Mammary epithelial cell (primary cell): ENCODE measurements at regions of chr9 and their contacts with region 1.

Region 1: DNA sequence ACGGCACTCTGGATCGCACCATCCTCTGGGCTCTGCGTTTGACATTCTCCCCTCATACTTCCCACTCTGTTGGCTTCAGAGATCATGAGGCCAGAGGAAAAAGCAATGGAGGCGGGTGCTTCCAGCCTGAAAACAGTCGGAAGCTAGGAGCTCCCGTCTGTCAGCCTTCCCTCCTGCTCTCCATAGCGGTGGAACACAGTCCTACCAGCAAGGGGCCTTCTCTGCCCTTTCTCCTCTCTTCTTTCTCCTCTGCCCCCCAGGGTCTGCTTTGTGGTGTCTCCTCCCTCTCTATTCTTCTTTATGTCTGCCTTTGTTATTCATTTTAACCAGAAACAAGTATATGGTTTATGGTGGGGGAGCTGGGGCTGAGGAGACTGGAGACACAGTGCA is 152.5 kb upstream of the NFIB start:
- DNase-seq: no peak
- H3K4me3 ChIP-seq: no peak overlapping the region
- H3K27ac ChIP-seq: no peak overlapping the region
- H3K4me1 ChIP-seq: no peaks in the 10 kb centered on the region
- H3K27me3 ChIP-seq: no peaks in the 10 kb centered on the region
- CTCF ChIP-seq: no peak

Region 2: GRCh38 chr9:14573333-14573732 is 106.9 kb after region 1 on chr9:
- CTCF ChIA-PET with region 1: no interaction called
- dilution Hi-C with region 1: no loop called
- in situ Hi-C with region 1: no loop called
- intact Hi-C with region 1: no loop called
- DNase-seq: no peak
- H3K4me3 ChIP-seq: no peak overlapping the region
- H3K27ac ChIP-seq: no peak overlapping the region
- H3K4me1 ChIP-seq: no peaks in the 10 kb centered on the region
- H3K27me3 ChIP-seq: no peaks in the 10 kb centered on the region
- CTCF ChIP-seq: no peak

Region 3: DNA sequence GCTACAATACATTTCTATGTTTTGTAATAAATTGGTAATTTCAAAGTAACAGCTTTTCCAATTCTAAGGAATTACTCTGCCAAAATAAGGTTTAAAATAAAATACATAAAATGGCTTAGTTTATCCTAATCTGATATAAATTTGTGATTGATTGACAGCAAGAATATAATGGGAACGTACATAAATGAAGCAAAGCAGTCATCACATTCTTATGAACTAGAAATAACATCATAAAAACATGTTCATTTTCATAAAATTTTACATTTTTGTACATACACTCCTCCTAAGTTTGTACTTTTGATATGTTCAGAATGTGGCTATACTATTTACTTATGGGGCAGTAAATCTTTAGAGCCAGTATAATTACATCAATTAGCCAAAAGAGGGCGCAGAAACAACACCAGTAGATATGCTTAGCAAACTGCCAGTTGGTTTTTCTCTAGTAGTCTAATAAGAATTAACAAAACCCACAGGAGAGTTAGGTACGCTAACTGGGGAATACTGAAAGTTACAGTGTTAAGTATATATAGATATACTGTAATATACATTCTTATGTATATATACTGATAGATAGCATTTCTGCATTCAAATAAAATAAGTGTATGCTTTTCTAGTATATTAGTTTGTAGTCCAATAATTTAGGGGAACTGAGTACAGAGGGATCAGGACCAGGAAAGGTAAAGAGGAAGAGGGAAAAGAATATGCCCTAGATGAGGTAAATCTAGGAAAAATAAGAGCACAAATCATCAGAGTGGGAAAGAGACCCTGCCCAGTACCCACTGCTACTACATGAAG is 150.0 kb after region 1 on chr9:
- CTCF ChIA-PET with region 1: no interaction called
- dilution Hi-C with region 1: no loop called
- in situ Hi-C with region 1: no loop called
- intact Hi-C with region 1: loop called (anchors 1 kb)
- DNase-seq: peak; percentile 34
- H3K4me3 ChIP-seq: no peak overlapping the region
- H3K27ac ChIP-seq: no peak overlapping the region
- H3K4me1 ChIP-seq: no peaks in the 10 kb centered on the region
- H3K27me3 ChIP-seq: no peaks in the 10 kb centered on the region
- CTCF ChIP-seq: peak; percentile 62 to 72

Region 4: DNA sequence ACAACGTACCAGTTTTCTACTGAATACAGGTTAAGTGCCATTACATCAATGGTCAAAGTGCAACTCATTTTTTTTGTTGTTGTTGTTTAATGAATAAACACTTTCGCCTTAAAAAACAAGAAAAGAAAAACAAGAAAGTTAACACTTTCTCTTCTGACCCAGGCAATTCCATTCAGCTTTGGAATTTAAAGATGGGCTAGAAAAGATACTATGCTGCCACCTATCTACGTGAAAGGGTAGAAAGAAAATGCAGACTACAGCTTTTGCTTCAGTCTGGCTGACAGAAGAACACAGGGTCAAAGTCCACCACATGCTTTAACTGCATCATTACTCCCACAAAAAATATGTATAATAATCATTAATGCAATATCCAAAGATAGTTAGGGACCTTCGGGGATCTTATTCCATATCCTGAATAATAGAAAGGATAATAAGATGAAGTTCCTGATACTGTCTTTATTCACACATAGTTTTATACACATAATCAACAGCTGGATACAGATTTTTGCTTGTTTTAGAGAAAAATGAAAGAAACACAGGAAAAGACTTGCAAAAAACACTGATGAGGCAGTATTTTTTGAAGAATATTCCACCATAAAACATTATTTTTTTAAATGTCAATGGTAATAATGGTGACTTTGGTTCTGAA is 186.4 kb after region 1 on chr9:
- CTCF ChIA-PET with region 1: no interaction called
- dilution Hi-C with region 1: no loop called
- in situ Hi-C with region 1: loop called in 1 of 2 experiments (anchors 25 kb)
- intact Hi-C with region 1: loop called (anchors 2 kb)
- DNase-seq: peak; percentile 3
- H3K4me3 ChIP-seq: no peak overlapping the region
- H3K27ac ChIP-seq: no peak overlapping the region
- H3K4me1 ChIP-seq: no peaks in the 10 kb centered on the region
- H3K27me3 ChIP-seq: no peaks in the 10 kb centered on the region
- CTCF ChIP-seq: peak; percentile 25 to 59

Region 5: DNA sequence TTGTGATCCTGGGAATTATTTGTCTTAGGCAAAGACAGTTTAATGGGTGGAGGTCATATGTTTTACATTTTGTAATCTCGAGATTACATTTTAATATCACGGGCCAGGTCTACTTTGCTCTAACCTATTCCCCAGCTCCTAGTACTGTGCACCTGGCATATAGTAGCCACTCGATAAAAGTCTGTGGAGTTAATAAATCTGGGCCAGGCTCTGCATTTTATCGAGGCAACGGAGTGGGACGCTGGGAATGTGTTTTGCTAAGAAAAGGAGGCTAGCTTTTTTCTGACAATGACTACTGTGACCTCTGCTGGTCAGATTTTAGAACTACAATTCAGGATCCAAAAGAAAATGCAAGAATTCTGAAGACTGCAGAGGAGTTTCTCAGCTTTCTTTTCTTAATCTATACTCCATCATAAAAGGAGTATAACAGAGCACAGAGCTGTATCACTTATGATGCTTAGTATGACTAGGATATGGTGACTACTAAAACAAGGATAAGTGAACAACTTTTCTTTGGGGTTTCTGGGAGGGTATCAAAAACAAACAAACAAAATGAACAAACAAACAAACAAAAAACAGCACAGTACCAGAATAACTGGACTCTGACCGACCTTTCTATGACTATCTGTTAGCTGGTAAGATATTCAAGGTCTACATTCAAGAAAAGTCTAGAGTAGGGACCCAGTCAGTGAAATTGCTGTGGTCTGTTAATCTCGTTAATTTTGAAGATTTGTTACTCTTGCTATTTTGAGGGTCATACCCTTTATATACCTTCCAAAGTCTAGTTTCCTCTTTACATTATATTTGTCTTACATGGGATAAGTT is 302.2 kb after region 1 on chr9:
- CTCF ChIA-PET with region 1: interaction called, 7 read pairs
- dilution Hi-C with region 1: no loop called
- in situ Hi-C with region 1: loop called (anchors 10 kb)
- intact Hi-C with region 1: loop called (anchors 1 kb)
- DNase-seq: peak; percentile 36
- H3K4me3 ChIP-seq: no peak overlapping the region
- H3K27ac ChIP-seq: no peak overlapping the region
- H3K4me1 ChIP-seq: no peaks in the 10 kb centered on the region
- H3K27me3 ChIP-seq: no peaks in the 10 kb centered on the region
- CTCF ChIP-seq: peak; percentile 56 to 72

Region 6: GRCh38 chr9:14846871-14847311 is 380.5 kb after region 1 on chr9:
- CTCF ChIA-PET with region 1: no interaction called
- dilution Hi-C with region 1: no loop called
- in situ Hi-C with region 1: no loop called
- intact Hi-C with region 1: loop called (anchors 2 kb)
- DNase-seq: peak; percentile 23
- H3K4me3 ChIP-seq: no peak overlapping the region
- H3K27ac ChIP-seq: no peak overlapping the region
- H3K4me1 ChIP-seq: no peaks in the 10 kb centered on the region
- H3K27me3 ChIP-seq: peaks cover 2% of the 10 kb centered on the region
- CTCF ChIP-seq: peak; percentile 79 to 89

Region 7: DNA sequence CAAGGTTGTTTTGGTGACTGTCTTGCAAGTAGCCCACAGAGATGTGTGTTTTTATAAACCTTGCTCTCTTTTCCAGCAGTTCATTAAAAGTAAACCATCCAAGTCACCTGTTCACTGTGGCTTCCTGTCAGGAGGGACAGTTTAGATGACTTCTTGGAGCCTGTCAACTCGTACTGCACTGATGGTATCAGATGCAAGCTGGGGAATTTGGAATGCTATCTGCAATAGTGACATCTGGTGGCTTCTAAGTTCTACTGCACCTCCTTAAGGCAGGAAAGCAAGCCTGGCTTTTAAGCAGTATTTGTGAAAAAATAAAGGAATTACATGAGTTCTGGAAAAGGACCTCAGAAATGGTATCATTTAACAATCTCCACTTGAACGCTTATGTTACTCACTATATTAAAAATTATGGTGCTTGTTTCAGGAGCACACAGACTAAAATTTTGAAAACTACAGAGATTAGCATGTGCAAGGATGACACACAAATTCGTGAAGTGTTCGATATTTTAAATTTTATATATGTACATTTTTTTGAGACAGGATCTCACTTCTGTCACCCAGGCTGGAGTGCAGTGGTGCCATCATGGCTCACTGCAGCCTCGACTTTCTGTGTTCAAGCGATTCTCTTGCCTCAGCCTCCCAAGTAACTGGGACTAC is 676.6 kb after region 1 on chr9:
- CTCF ChIA-PET with region 1: no interaction called
- dilution Hi-C with region 1: no loop called
- in situ Hi-C with region 1: no loop called
- intact Hi-C with region 1: loop called (anchors 5 kb)
- DNase-seq: no peak
- H3K4me3 ChIP-seq: no peak overlapping the region
- H3K27ac ChIP-seq: no peak overlapping the region
- H3K4me1 ChIP-seq: peaks cover 6% of the 10 kb centered on the region
- H3K27me3 ChIP-seq: no peaks in the 10 kb centered on the region
- CTCF ChIP-seq: peak; percentile 82 to 86

Region 8: GRCh38 chr9:15606643-15607472 is 1140.4 kb after region 1 on chr9:
- CTCF ChIA-PET with region 1: no interaction called
- dilution Hi-C with region 1: no loop called
- in situ Hi-C with region 1: no loop called
- intact Hi-C with region 1: no loop called
- DNase-seq: peak; percentile 36
- H3K4me3 ChIP-seq: no peak overlapping the region
- H3K27ac ChIP-seq: no peak overlapping the region
- H3K4me1 ChIP-seq: no peaks in the 10 kb centered on the region
- H3K27me3 ChIP-seq: no peaks in the 10 kb centered on the region
- CTCF ChIP-seq: peak; percentile 52 to 55